ENCODE measurements at regions of chr19 and their contacts with region 1.

Region 1: DNA sequence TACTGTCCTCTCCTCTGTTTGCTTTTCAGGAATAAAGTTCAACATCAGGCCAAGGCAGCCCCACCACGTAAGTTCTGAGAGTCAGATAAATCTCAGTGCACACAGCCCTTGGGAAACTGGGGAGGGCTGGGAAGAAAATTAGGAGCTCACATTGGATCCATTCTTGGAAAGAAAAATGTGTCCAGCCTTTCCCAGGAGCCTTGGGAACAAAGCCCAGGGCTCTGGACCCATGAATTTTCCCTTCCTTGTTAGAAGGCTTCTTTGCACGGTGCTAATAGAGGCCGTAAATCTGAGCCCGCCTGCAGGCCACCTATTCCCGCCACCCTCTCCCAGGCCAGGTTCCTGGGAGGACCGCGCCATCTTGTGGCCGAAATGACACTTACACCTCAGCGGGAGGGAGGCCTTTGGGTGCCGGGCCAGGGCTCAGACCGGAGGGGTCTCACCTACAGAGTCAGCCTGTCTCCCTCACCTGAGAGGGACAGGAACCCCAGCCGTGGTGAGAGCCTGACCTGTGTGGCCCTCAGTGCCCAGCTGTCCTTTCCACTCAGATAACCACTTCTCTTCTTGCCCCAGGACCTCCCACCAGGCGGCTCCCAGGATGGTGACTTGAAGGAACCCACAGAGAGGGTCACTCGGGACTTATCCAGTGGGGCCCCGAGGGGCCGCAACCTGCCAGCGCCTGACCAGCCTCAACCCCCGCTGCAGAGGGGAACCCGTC is 25.1 kb upstream of the KCTD15 start:
- DNase-seq: peak; percentile 47 to 75
- ATAC-seq: peak in 2 of 3 donors; percentile 73 to 80
- H3K4me3 ChIP-seq: no peak overlapping the region
- H3K4me3 Mint-ChIP-seq: no peak overlapping the region
- H3K27ac ChIP-seq: no peak overlapping the region
- H3K27ac Mint-ChIP-seq: no peak overlapping the region
- H3K4me1 ChIP-seq: no peaks in the 10 kb centered on the region
- H3K4me1 Mint-ChIP-seq: no peaks in the 10 kb centered on the region
- H3K27me3 ChIP-seq: no peaks in the 10 kb centered on the region
- H3K27me3 Mint-ChIP-seq: peaks cover 0 to 6% of the 10 kb centered on the region in 2 donors
- CTCF ChIP-seq: peak; percentile 41

Region 2: DNA sequence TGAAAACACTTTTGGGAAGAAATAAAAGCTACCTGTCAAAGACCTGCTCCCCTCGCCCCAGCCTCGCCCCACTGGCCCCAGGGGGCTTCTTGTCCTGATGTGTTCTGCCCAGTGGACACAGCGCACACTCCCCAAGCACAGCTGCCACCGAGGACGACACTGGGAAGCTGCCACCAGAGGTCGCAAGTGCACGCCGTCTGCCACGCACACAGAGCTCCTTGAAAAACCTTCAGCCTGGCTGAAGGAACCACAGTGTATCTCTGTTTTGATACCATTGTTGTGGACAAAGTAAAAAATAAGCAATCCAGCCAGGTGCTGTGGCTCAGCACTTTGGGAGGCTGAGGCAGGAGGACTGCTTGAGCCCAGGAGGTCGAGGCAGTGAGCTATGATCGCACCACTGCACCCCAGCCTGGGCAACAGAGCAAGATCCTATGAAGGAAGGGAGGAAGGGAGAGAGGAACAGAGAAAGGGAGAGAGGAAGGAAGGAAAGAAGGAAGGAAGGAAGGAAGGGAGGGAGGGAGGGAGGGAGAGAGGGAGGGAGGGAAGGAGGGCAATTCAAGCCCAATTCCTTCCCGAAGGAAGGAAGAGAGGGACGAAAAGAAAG is 340.8 kb before region 1 on chr19:
- intact Hi-C with region 1: loop called (anchors 1 kb)
- DNase-seq: peak; percentile 57 to 76
- ATAC-seq: peak; percentile 72 to 93 (median 83)
- H3K4me3 ChIP-seq: no peak overlapping the region
- H3K4me3 Mint-ChIP-seq: no peak overlapping the region
- H3K27ac ChIP-seq: peak overlapping the region; percentile 60
- H3K27ac Mint-ChIP-seq: peak overlapping the region in 1 of 2 donors; percentile 81
- H3K4me1 ChIP-seq: peaks cover 11% of the 10 kb centered on the region
- H3K4me1 Mint-ChIP-seq: peaks cover 6 to 9% of the 10 kb centered on the region in 2 donors
- H3K27me3 ChIP-seq: no peaks in the 10 kb centered on the region
- H3K27me3 Mint-ChIP-seq: no peaks in the 10 kb centered on the region
- CTCF ChIP-seq: peak; percentile 80

Region 3: DNA sequence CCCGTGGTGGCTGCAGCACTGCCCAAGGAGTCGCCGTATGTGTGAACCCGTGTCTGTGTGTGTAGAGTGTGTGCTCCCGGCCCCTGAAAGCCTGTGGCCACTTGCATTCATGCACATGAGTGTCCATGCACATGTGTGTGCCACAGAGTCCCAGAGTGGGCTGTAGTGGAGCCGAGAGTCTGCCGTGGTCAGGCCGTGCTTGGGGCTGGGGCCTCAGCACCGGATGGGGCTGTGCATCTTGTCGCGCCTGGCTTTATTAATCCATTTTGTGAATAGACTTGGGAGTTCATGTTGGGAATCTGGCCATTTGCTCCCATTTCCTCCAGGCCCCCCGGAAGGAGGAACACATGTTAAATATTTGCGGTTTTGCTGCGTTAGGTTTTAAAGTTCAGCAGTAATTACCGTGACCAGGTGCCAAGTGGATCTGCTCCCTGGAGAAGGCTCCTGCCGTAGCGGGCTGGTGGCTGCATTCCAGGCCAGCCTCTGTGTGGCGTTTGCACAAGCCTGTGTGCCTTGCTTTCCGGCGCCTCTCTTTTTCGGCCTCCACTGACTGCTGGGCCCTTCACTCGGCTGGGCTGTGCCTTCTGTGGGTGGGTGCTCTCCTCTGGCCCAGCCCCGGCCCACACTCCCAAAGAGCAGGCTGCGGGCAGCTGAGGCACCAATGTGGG is 44.1 kb before region 1 on chr19:
- intact Hi-C with region 1: no loop called
- DNase-seq: no peak
- ATAC-seq: no peak
- H3K4me3 ChIP-seq: no peak overlapping the region
- H3K4me3 Mint-ChIP-seq: no peak overlapping the region
- H3K27ac ChIP-seq: no peak overlapping the region
- H3K27ac Mint-ChIP-seq: no peak overlapping the region
- H3K4me1 ChIP-seq: no peaks in the 10 kb centered on the region
- H3K4me1 Mint-ChIP-seq: no peaks in the 10 kb centered on the region
- H3K27me3 ChIP-seq: no peaks in the 10 kb centered on the region
- H3K27me3 Mint-ChIP-seq: peaks cover 0 to 7% of the 10 kb centered on the region in 2 donors
- CTCF ChIP-seq: no peak

Measured in natural killer cell (primary cell).